ENCODE measurements at regions of chr14 and their contacts with region 1.

Region 1: DNA sequence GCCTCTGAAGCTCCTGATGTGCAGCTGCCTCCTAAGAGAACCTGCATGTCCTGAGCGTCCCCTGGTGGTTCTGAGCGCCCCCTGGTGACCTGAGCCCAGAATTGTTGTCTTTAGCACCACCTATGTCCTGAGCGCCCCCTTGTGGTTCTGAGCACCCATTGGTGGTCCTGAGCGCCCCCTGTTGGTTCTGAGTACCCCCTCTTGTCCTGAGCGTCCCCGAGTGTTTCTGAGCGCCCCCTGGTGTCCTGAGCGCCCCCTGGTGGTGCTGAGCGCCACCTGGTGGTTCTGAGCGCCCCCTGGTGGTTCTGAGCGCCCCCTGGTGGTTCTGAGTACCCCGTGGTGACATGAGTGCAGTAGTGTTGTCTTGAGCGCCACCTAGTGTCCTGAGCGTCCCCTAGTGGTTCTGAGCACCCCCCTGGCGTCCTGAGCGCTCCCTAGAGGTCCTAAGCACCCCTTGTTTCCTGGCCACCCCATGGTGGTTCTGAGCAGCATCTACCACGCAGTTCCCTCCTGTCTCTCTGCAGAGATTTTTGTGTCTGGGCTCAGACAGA is 782.5 kb downstream of the TMEM121 start:
- DNase-seq: peak; percentile 93
- ATAC-seq: peak; percentile 97
- H3K4me3 Mint-ChIP-seq: no peak overlapping the region
- H3K27ac Mint-ChIP-seq: no peak overlapping the region
- H3K4me1 Mint-ChIP-seq: no peaks in the 10 kb centered on the region
- H3K27me3 Mint-ChIP-seq: peaks cover 3% of the 10 kb centered on the region
- CTCF ChIP-seq: peak; percentile 95

Region 2: GRCh38 chr14:105879867-105880561 is 428.9 kb before region 1 on chr14:
- CTCF ChIA-PET with region 1: no interaction called
- POLR2A ChIA-PET with region 1: no interaction called
- intact Hi-C with region 1: no loop called
- DNase-seq: no peak
- ATAC-seq: no peak
- H3K4me3 Mint-ChIP-seq: no peak overlapping the region
- H3K27ac Mint-ChIP-seq: peak overlapping the region; percentile 55
- H3K4me1 Mint-ChIP-seq: peaks cover 4% of the 10 kb centered on the region
- H3K27me3 Mint-ChIP-seq: peaks cover 1% of the 10 kb centered on the region
- CTCF ChIP-seq: no peak

Region 3: GRCh38 chr14:106277503-106277902 is 31.4 kb before region 1 on chr14:
- CTCF ChIA-PET with region 1: interaction called, 22 read pairs
- POLR2A ChIA-PET with region 1: interaction called, 3 read pairs
- intact Hi-C with region 1: no loop called
- DNase-seq: peak; percentile 9
- ATAC-seq: no peak
- H3K4me3 Mint-ChIP-seq: no peak overlapping the region
- H3K27ac Mint-ChIP-seq: no peak overlapping the region
- H3K4me1 Mint-ChIP-seq: peaks cover 13% of the 10 kb centered on the region
- H3K27me3 Mint-ChIP-seq: no peaks in the 10 kb centered on the region
- CTCF ChIP-seq: peak; percentile 75

Region 4: DNA sequence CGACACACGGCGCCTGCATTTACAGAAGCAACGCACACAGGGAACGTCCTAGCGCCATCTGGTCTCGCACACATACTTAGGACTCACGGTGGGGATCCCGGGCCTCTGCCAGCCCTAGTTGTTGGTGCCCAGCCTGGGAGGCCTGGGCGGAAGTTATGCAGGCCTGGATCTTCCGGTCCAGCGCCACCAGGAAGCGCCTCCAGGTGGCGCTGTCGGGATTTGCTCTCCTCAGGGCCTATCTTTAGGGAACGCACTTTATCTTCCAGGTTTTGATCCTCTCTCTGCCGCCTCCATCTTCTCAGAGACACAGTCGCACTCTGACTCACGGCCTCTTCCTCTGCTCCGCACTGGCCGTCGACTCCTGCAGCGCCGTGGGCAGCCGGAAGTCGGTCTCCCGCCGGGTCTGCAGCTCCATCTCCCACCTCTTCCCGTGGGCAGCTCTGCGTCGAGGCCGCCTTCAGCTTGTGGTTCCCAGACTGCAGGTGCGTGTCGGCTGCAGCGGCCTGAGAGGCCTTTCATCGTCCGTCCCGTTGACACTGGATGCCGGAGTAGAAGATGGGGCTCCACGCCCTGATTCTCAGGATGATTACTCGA is 22.1 kb before region 1 on chr14:
- CTCF ChIA-PET with region 1: interaction called, 22 read pairs
- POLR2A ChIA-PET with region 1: no interaction called
- intact Hi-C with region 1: no loop called
- DNase-seq: peak; percentile 15
- ATAC-seq: no peak
- H3K4me3 Mint-ChIP-seq: no peak overlapping the region
- H3K27ac Mint-ChIP-seq: no peak overlapping the region
- H3K4me1 Mint-ChIP-seq: no peaks in the 10 kb centered on the region
- H3K27me3 Mint-ChIP-seq: peaks cover 3% of the 10 kb centered on the region
- CTCF ChIP-seq: peak; percentile 41

Region 5: GRCh38 chr14:106294324-106294723 is 14.6 kb before region 1 on chr14:
- CTCF ChIA-PET with region 1: interaction called, 21 read pairs
- POLR2A ChIA-PET with region 1: no interaction called
- intact Hi-C with region 1: no loop called
- DNase-seq: no peak
- ATAC-seq: no peak
- H3K4me3 Mint-ChIP-seq: no peak overlapping the region
- H3K27ac Mint-ChIP-seq: no peak overlapping the region
- H3K4me1 Mint-ChIP-seq: no peaks in the 10 kb centered on the region
- H3K27me3 Mint-ChIP-seq: peaks cover 4% of the 10 kb centered on the region
- CTCF ChIP-seq: no peak

Region 6: DNA sequence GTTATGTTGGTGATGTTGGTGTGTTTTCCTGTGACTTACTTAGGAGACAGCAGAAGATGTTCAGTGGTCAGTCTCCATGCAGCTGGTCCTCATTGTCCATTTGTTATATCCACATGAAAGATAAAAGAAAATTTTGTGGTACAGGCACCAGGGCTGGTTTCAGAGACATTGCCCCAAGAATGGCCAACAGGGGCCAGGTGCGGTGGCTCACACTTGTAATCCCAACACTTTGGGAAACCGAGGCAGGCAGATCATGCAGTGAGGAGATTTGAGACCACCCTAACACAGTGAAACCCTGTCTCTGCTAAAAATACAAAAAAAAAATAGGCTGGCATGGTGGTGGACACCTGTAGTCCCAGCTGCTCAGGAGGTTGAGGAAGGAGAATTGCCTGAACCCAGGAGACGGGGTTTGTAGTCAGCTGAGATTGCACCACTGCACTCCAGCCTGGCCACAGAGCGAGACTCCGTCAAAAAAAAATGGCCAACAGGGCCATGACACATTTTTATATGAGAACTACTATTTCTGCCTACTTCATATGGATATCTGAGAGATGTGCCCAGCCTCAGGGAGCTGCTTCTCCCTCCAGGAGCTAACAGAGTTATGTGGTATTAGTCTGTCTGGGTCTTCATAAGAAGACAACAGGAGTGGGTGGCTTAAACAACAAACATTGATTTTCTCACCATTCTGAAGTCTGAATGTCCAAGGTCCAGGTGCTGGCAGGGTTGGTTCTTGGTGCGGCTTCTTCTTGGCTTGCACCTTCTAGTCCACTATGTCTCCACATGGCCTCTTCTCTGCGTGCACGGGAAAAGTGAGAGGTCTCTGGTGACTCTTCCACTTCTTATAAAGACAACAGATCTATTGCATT is 39.2 kb after region 1 on chr14:
- CTCF ChIA-PET with region 1: interaction called, 14 read pairs
- POLR2A ChIA-PET with region 1: no interaction called
- intact Hi-C with region 1: no loop called
- DNase-seq: no peak
- ATAC-seq: no peak
- H3K4me3 Mint-ChIP-seq: no peak overlapping the region
- H3K27ac Mint-ChIP-seq: no peak overlapping the region
- H3K4me1 Mint-ChIP-seq: peaks cover 4% of the 10 kb centered on the region
- H3K27me3 Mint-ChIP-seq: peaks cover 3% of the 10 kb centered on the region
- CTCF ChIP-seq: no peak

Measured in activated CD8-positive, alpha-beta T cell treated with anti-CD3 and anti-CD28 coated beads for 36 hours (primary cell).